ENCODE measurements at regions of chr11 and their contacts with region 1.

Region 1: DNA sequence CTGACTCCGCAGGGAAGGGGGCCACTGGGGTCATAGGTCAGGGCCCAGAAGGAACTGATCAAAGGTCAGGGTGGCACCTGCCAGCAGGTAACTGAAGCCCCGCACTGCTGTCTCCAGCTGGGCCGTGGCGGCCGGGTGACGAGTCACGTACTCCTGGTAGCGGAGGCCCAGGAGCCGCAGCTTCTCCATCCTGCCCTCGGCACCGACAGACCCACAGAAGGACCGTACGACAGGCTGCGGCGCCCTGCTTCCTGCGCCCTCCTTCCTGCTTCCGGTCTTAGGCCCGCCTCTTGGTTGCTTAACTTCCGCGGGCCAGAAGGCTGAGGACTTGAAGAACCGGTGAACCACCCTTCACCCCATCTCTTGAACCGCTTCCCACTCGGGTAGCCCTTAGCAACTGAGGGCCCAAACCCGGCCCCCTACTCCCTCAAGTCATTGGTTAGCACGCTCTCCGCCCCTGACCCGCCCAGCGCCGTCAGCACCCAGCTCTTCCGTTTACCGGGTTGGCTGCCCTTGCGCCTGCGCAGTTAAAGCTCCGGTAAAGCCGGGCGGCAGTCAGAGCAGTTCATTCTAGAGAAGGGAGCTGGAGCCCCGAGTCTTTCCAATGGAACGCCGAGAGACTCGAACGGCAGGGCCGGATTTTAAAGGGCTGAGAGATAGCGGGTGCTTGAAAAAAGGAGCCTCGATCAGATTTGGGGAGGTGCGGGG is at the start of gene PEX16:
- DNase-seq: peak; percentile 97 to 98
- ATAC-seq: peak; percentile 92 to 94
- H3K4me3 ChIP-seq: peak within 1 kb of the TSS; percentile 88 to 97 (median 94)
- H3K27ac ChIP-seq: peak within 1 kb of the TSS; percentile 88 to 96 (median 94)
- H3K4me1 ChIP-seq: peaks cover 14 to 20% of the 10 kb centered on the region in 2 donors
- H3K27me3 ChIP-seq: peaks cover 8 to 12% (median 9%) of the 10 kb centered on the region in 3 donors
- CTCF ChIP-seq: no peak
- POLR2A ChIP-seq: peak; percentile 82
- total RNA-seq, gene PEX16: 18.5 to 27.2 (median 20.5) TPM

Region 2: GRCh38 chr11:45804761-45805304 is 112.9 kb before region 1 on chr11 and contains the start of gene SLC35C1:
- in situ Hi-C with region 1: no loop called
- intact Hi-C with region 1: loop called (anchors 1 kb)
- DNase-seq: peak; percentile 96
- ATAC-seq: peak; percentile 87
- H3K4me3 ChIP-seq: peak within 1 kb of the TSS; percentile 76 to 96 (median 86)
- H3K27ac ChIP-seq: peak within 1 kb of the TSS; percentile 86 to 94 (median 91)
- H3K4me1 ChIP-seq: peaks cover 28 to 29% of the 10 kb centered on the region in 2 donors
- H3K27me3 ChIP-seq: no peaks in the 10 kb centered on the region
- CTCF ChIP-seq: peak in 4 of 5 experiments; percentile 25 to 48 (median 34)
- POLR2A ChIP-seq: peak; percentile 88 to 94
- total RNA-seq, gene SLC35C1: 4.8 to 11.7 (median 7.8) TPM

Region 3: GRCh38 chr11:45859661-45860140 is 58.1 kb before region 1 on chr11:
- in situ Hi-C with region 1: no loop called
- intact Hi-C with region 1: loop called (anchors 5 kb)
- DNase-seq: peak; percentile 91 to 96
- ATAC-seq: peak; percentile 70 to 74
- H3K4me3 ChIP-seq: peak overlapping the region in 1 of 4 donors; percentile 19
- H3K27ac ChIP-seq: peak overlapping the region; percentile 91 to 99 (median 99)
- H3K4me1 ChIP-seq: peaks cover 67 to 69% of the 10 kb centered on the region in 2 donors
- H3K27me3 ChIP-seq: no peaks in the 10 kb centered on the region
- CTCF ChIP-seq: no peak
- POLR2A ChIP-seq: peak; percentile 55 to 59

Region 4: GRCh38 chr11:46006418-46007070 is 88.8 kb after region 1 on chr11:
- in situ Hi-C with region 1: no loop called
- intact Hi-C with region 1: no loop called
- DNase-seq: no peak
- ATAC-seq: peak; percentile 70 to 92
- H3K4me3 ChIP-seq: no peak overlapping the region
- H3K27ac ChIP-seq: no peak overlapping the region
- H3K4me1 ChIP-seq: peaks cover 9 to 11% of the 10 kb centered on the region in 2 donors
- H3K27me3 ChIP-seq: no peaks in the 10 kb centered on the region
- CTCF ChIP-seq: peak; percentile 33 to 82 (median 68)
- POLR2A ChIP-seq: no peak

Region 5: DNA sequence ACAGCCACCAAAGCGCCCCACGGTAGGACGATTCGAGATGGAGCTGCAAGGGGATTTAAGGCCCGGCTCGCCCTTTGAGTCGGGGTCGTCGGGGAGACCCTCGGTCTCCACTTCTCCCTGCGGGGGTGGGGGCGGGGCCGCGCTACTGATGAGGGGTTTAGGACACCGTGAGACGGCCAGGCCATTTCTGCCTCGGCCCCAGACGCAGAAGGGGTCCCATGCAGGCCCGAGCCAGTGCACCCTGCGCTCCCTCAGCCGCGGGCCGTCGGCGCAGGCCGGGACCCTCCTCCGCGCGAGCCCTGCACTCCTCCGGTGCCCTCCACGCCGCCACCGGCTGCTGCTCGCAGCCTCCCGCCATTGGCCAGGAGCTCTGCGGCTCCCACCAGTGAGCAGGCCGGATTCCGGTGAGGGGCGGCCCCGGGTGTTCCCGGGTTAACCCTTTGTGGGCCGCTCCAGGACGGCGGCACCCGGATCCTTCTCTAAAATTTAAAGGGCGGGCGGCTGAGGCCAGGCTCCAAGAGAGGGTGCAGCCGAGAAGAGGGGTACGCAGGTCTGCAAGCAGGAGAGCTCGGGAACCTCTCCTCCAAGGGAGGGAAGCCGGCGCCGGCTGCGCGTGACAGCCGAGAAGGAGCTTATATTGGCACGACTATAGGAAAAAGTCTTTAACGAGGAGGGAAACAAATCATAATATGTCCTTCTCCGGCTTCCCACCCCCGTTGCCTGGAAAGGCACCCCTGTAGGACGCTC is 377.7 kb after region 1 on chr11:
- in situ Hi-C with region 1: no loop called
- intact Hi-C with region 1: loop called (anchors 1 kb)
- DNase-seq: peak; percentile 60 to 66
- ATAC-seq: peak; percentile 75 to 85
- H3K4me3 ChIP-seq: peak overlapping the region; percentile 63 to 72 (median 64)
- H3K27ac ChIP-seq: peak overlapping the region in 1 of 4 donors; percentile 44
- H3K4me1 ChIP-seq: peaks cover 12 to 13% of the 10 kb centered on the region in 2 donors
- H3K27me3 ChIP-seq: no peaks in the 10 kb centered on the region
- CTCF ChIP-seq: no peak
- POLR2A ChIP-seq: no peak

Region 6: DNA sequence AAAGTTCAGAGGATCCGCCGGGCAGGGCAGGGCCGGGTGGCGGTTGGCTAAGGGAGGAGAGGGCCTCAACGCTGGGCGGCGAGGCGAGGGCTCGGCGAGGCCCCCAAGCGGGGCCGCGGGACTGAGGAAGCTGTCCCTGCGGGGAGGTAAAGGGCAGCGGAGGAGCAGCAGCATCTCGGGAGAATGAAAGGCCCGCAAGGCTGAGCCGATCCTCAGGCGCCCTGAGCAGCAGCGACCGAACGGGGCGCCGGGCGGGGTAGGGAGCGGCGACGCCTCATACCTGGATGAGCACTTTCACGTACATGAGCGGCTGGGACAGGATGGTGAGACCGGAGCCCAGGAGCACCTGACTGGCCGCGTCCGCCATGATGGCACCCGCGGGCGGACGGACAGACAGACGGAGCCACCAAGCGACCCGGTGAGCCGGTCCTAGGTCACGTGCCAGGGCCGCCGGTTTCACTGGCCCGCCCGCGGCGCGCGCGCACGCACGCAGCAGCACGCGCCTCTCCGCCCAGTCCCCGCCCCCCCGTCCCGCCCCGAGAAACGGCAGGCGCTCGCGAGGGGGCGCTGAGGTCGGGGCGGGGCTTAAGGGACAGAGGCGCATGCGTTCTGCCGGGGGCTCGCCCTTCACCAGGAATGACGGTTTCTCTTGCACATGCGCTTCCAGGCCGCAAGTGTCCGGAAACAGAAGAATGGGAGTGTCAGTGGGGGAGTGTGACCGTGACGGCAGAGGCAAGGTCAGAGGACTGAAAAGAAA is 1724.5 kb after region 1 on chr11 and contains the start of gene MTCH2:
- in situ Hi-C with region 1: no loop called
- intact Hi-C with region 1: loop called (anchors 2 kb)
- DNase-seq: peak; percentile 94 to 95
- ATAC-seq: peak; percentile 95 to 96
- H3K4me3 ChIP-seq: peak within 1 kb of the TSS; percentile 70 to 100 (median 88)
- H3K27ac ChIP-seq: peak within 1 kb of the TSS; percentile 89 to 100 (median 99)
- H3K4me1 ChIP-seq: peaks cover 20 to 22% of the 10 kb centered on the region in 2 donors
- H3K27me3 ChIP-seq: no peaks in the 10 kb centered on the region
- CTCF ChIP-seq: peak in 3 of 5 experiments; percentile 35 to 56 (median 49)
- POLR2A ChIP-seq: peak; percentile 86 to 88
- total RNA-seq, gene MTCH2: 70.3 to 139 (median 85.6) TPM